Posterior vena cava (tissue), 2 donors: ENCODE measurements at regions of chr3 and their contacts with region 1.

Region 1: GRCh38 chr3:185659942-185660921 is 74.1 kb downstream of the SENP2 start:
- DNase-seq: peak; percentile 93

Region 2: DNA sequence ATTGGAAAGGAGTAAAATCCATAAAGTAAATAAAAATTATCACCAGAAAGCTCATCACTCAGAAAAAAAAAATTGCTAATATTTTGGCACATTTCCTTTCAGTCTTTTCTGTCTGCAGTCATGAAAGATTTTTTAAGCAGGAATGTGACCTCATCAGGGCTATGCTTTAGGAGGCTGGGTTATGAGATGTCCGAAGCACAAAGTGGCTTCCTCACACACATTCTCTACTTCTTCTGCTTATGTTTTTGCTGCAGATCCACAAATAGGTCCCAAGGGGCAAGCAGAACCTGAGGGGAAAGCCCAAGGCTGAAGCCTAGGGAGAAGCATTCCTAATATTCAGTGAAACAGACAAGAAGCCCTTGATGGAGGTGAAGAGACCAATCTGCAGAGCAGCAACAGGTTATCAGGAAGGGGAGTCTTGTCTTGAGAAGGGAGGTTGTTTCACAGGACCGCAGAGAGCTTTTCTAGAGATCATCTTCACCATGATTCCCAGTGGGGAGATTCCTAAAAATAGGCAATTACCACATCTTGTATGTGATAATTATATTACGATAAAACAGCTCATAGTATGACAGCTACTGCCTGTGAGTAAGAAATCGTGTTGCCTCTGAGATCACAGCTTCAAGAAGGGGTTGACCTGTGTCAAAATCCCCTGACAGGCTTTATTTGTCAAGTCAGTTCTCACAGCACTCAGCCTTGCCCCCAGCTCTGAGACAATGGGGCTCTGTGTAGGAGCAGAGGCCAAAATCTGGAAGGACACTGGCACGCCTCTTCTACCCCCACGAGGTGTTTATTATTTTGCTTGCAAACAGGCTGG is 104.1 kb after region 1 on chr3:
- intact Hi-C with region 1: loop called in 1 of 2 experiments (anchors 10 kb)
- DNase-seq: no peak

Region 3: DNA sequence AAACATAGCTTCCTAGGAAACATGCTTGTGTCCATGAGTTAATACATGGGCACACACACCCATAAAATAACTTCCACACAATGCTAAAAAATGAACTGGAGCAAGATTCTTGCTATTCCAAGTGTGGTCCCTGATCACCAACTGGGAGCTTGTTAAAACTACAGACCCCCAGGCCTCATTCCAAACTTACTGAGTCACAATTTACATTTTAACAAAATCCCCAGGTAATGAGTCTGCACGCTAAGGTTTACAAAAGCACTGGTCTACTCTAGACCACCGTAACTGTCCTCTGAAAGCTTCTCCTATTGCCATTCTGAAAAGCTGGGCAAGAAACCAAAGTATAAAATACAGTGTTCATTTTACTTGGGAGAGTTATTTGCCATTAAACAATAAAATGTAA is 119.2 kb after region 1 on chr3:
- intact Hi-C with region 1: loop called in 1 of 2 experiments (anchors 10 kb)
- DNase-seq: no peak